ENCODE measurements at regions of chr20 and their contacts with region 1.

Region 1: DNA sequence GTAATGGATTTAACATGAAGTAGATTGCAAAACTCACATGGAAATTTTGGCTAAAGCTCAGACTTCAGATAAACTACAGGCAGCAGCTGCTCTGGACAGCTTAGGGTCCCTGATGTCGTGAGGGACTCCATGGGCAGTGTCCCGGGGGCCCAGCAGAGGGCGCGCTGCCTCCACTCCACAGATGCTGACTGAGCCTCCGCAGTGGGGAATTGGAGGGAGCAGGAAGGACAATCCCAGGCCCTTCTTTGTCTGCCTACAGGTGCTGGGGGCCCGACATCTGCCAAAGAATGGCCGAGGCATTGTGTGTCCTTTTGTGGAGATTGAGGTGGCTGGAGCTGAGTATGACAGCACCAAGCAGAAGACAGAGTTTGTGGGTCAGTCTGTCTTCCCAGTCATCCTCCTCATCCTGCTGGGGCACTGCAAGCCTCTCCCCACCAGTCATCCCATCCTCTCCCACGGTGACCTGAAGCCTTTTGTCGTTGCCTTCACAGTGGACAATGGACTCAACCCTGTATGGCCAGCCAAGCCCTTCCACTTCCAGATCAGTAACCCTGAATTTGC is 35.9 kb downstream of the PLCG1 start:
- DNase-seq: peak; percentile 73 to 83
- ATAC-seq: peak; percentile 85 to 88
- H3K4me3 ChIP-seq: no peak overlapping the region
- H3K27ac ChIP-seq: peak overlapping the region; percentile 68 to 80 (median 76)
- H3K4me1 ChIP-seq: peaks cover 59 to 65% of the 10 kb centered on the region in 2 donors
- H3K27me3 ChIP-seq: no peaks in the 10 kb centered on the region
- CTCF ChIP-seq: peak; percentile 96 to 98 (median 97)
- POLR2A ChIP-seq: no peak

Region 2: DNA sequence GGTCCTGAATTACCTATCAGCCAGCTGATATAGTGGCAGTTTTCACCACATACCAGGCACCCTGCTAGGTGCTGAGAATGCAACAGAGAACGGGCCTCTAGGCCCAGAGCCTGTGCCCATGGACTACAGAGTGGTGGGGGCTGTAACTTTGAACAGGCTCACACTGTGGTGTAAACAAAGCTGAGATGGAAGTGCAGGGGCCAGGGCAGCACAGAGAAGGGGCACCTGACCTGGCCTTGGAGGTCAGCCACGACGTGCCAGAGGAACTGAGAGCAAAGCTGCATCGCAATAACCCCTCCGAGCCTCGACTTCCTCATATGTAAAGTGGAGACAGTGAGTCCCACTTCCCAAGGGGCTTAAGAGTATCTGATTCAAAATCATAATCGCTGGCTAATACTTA is 590.0 kb before region 1 on chr20:
- in situ Hi-C with region 1: no loop called
- intact Hi-C with region 1: no loop called
- DNase-seq: peak in 1 of 2 donors; percentile 43
- ATAC-seq: peak in 1 of 2 donors; percentile 39
- H3K4me3 ChIP-seq: no peak overlapping the region
- H3K27ac ChIP-seq: no peak overlapping the region
- H3K4me1 ChIP-seq: no peaks in the 10 kb centered on the region
- H3K27me3 ChIP-seq: no peaks in the 10 kb centered on the region
- CTCF ChIP-seq: no peak
- POLR2A ChIP-seq: no peak

Region 3: GRCh38 chr20:41411391-41411847 is 238.2 kb after region 1 on chr20:
- in situ Hi-C with region 1: no loop called
- intact Hi-C with region 1: loop called (anchors 2 kb)
- DNase-seq: no peak
- ATAC-seq: peak; percentile 55 to 78
- H3K4me3 ChIP-seq: no peak overlapping the region
- H3K27ac ChIP-seq: peak overlapping the region; percentile 65 to 81 (median 70)
- H3K4me1 ChIP-seq: peaks cover 49 to 65% of the 10 kb centered on the region in 2 donors
- H3K27me3 ChIP-seq: no peaks in the 10 kb centered on the region
- CTCF ChIP-seq: peak in 2 of 5 experiments; percentile 55 to 61
- POLR2A ChIP-seq: no peak